Sigmoid colon (tissue), 7 donors: ENCODE measurements at regions of chr2 and their contacts with region 1.

Region 1: DNA sequence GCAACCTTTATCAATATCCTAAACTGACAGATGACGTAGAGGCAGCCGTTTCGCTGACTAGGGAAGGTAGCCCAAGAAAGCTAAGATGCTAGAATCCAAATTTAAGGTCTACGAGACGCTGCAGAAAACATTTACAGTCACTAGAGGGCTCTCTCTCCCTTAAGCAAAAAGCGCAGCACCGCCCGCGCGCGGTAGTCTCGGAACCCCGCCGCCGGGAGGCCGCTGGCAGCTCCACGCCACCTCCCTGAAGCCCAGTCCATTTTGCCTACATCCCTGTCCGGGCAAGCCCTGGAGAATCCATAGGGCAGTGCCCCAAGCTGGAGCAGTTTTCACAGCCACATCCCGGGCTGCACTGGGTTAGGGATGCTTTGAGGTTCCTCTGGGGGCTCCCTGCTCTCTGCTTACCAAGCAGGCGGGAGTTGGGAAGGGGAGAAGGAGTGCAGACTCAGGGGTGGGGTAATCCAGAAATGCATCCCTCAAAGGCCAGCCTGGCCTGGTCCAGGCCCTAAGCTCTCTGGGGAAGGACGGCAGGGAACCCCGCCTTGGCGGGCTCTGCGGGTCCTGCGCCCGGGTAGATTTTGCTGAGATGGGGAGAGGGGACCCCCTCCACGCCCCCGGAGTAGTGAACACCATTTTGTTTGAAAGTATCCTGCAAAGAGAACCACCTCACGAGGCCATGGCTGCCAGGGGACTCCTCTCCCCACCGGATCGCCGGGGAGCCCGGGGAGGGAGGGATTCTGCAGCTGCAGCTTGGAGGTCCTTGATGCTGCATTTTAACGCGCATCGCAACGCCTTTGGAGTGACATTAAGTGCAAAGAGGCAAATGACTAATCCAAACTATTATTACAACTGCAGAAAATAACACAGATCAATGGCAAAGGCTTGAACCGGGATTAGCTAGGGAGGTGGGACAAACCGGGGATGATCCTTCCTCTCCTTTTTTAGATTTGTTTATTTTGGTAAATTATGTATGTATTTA is 1.3 kb upstream of the DPYSL5 start:
- DNase-seq: peak; percentile 82
- H3K4me3 ChIP-seq: no peak overlapping the region
- H3K27ac ChIP-seq: no peak overlapping the region
- H3K4me1 ChIP-seq: peaks cover 0 to 39% (median 37%) of the 10 kb centered on the region in 4 donors
- H3K27me3 ChIP-seq: peaks cover 35 to 98% (median 84%) of the 10 kb centered on the region in 3 donors
- CTCF ChIP-seq: peak; percentile 31 to 72 (median 63)
- EP300 ChIP-seq: no peak
- POLR2A ChIP-seq: no peak

Region 2: GRCh38 chr2:26816893-26817292 is 29.7 kb before region 1 on chr2:
- intact Hi-C with region 1: no loop called
- DNase-seq: no peak
- H3K4me3 ChIP-seq: no peak overlapping the region
- H3K27ac ChIP-seq: no peak overlapping the region
- H3K4me1 ChIP-seq: no peaks in the 10 kb centered on the region
- H3K27me3 ChIP-seq: peaks cover 0 to 31% (median 4%) of the 10 kb centered on the region in 3 donors
- CTCF ChIP-seq: no peak
- EP300 ChIP-seq: no peak
- POLR2A ChIP-seq: no peak

Region 3: GRCh38 chr2:26942543-26943295 is 96.1 kb after region 1 on chr2:
- intact Hi-C with region 1: loop called (anchors 1 kb)
- DNase-seq: peak; percentile 82
- H3K4me3 ChIP-seq: no peak overlapping the region
- H3K27ac ChIP-seq: no peak overlapping the region
- H3K4me1 ChIP-seq: no peaks in the 10 kb centered on the region
- H3K27me3 ChIP-seq: peaks cover 0 to 32% (median 5%) of the 10 kb centered on the region in 3 donors
- CTCF ChIP-seq: peak in 3 of 4 experiments; percentile 58 to 65 (median 65)
- EP300 ChIP-seq: no peak
- POLR2A ChIP-seq: no peak

Region 4: GRCh38 chr2:26982102-26982742 is 135.6 kb after region 1 on chr2:
- intact Hi-C with region 1: no loop called
- DNase-seq: peak; percentile 90
- H3K4me3 ChIP-seq: no peak overlapping the region
- H3K27ac ChIP-seq: peak overlapping the region in 2 of 4 donors; percentile 39 to 57
- H3K4me1 ChIP-seq: peaks cover 0 to 28% (median 20%) of the 10 kb centered on the region in 4 donors
- H3K27me3 ChIP-seq: no peaks in the 10 kb centered on the region
- CTCF ChIP-seq: peak in 3 of 4 experiments; percentile 38 to 54 (median 50)
- EP300 ChIP-seq: no peak
- POLR2A ChIP-seq: no peak

Region 5: DNA sequence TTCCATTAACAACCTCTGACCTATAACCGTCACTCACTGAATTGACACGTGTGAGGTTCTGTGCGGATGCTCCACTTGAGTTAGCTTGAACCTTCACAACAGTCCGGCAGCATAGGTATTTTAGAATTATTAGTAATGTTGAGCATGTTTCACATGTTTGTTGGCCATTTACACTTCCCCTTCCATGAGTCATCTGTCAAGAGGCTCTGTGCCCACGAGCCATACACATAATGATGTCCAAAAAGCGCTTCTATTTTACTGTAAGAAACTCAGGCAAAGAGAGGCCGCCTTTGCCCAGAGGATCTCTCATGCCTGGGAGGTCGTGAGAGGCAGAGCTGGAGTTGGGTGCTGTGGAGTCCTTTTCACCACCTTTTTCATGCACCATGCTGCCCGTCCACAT is 157.2 kb after region 1 on chr2:
- intact Hi-C with region 1: no loop called
- DNase-seq: no peak
- H3K4me3 ChIP-seq: no peak overlapping the region
- H3K27ac ChIP-seq: no peak overlapping the region
- H3K4me1 ChIP-seq: no peaks in the 10 kb centered on the region
- H3K27me3 ChIP-seq: no peaks in the 10 kb centered on the region
- CTCF ChIP-seq: no peak
- EP300 ChIP-seq: no peak
- POLR2A ChIP-seq: no peak

Region 6: DNA sequence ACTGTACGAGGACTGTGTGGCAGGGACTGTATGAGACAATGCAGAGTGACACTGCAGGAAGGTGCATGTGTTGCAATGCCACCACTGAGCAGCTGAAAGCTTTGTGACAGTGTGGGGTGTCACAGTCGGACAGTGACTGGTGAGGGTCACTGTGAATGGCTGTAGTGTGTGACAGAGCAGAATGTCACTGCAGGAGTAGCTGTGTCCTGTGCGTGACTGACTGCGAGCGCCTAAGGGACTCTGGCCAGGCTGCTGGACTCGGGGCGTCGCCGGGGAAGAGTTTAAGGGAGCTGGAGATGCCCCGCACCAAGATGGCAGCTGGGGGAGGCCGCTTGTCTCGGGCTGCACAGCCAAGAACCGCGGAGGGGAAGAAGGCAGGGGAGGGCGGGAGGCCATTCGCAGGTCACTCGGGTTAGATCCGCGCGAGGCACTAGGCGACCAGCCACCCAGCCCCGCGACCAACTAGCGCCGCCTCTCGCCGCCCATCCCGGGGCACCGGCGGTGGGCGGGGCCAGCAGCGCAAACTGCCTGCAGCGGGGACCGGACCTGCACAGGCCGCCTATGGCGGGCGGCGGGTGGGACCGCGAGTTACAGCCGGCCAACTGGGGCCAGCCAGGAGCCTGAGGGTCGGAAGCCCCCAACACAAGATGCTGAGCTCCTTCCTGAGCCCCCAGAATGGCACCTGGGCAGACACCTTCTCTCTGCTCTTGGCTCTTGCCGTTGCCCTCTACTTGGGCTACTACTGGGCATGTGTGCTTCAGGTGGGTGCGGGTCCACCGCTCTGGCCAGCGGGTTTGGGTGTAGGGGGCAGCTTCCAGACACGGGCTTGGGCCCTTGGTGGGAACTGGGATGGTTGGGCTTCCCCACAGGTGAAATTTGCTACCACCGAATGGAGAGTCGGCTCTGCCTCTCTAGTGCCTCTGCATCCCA is 276.9 kb after region 1 on chr2 and contains the start of gene ABHD1:
- intact Hi-C with region 1: no loop called
- DNase-seq: peak; percentile 79
- H3K4me3 ChIP-seq: peak within 1 kb of the TSS; percentile 27 to 63 (median 54)
- H3K27ac ChIP-seq: peak within 1 kb of the TSS; percentile 4 to 43 (median 36)
- H3K4me1 ChIP-seq: peaks cover 0 to 18% (median 10%) of the 10 kb centered on the region in 4 donors
- H3K27me3 ChIP-seq: peaks cover 8 to 11% (median 10%) of the 10 kb centered on the region in 3 donors
- CTCF ChIP-seq: no peak
- EP300 ChIP-seq: no peak
- POLR2A ChIP-seq: no peak
- total RNA-seq, gene ABHD1: not detected